ENCODE measurements at regions of chr15 and their contacts with region 1.

Region 1: DNA sequence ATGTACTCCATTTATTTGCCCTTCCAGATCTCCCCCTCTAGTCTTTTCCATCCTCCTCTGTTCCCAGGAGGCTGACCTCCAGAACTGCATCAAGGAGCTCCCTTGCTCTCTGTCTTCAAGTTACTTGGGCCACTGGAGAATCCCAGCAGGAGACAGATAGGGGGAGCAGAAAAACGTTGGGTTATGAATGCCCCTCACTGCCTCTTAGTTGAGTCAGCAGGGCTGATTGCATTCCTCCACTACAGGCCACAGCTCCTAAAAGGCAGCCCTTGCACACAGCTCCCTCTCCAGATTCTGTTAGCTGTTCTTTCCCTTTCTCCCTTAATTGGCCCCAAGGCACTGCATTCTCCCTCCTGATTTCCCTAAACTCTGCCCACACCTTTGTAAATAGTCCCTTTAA is 12.4 kb upstream of the CEP152 start:
- DNase-seq: no peak
- H3K4me3 Mint-ChIP-seq: no peak overlapping the region
- H3K27ac Mint-ChIP-seq: no peak overlapping the region
- H3K4me1 Mint-ChIP-seq: no peaks in the 10 kb centered on the region
- H3K27me3 Mint-ChIP-seq: peaks cover 9% of the 10 kb centered on the region

Region 2: GRCh38 chr15:48800811-48801455 is 22.3 kb before region 1 on chr15:
- CTCF ChIA-PET with region 1: no interaction called
- POLR2A ChIA-PET with region 1: interaction called, 12 read pairs
- DNase-seq: no peak
- H3K4me3 Mint-ChIP-seq: no peak overlapping the region
- H3K27ac Mint-ChIP-seq: no peak overlapping the region
- H3K4me1 Mint-ChIP-seq: peaks cover 62% of the 10 kb centered on the region
- H3K27me3 Mint-ChIP-seq: no peaks in the 10 kb centered on the region